ENCODE measurements at regions of chr1 and their contacts with region 1.

Region 1: DNA sequence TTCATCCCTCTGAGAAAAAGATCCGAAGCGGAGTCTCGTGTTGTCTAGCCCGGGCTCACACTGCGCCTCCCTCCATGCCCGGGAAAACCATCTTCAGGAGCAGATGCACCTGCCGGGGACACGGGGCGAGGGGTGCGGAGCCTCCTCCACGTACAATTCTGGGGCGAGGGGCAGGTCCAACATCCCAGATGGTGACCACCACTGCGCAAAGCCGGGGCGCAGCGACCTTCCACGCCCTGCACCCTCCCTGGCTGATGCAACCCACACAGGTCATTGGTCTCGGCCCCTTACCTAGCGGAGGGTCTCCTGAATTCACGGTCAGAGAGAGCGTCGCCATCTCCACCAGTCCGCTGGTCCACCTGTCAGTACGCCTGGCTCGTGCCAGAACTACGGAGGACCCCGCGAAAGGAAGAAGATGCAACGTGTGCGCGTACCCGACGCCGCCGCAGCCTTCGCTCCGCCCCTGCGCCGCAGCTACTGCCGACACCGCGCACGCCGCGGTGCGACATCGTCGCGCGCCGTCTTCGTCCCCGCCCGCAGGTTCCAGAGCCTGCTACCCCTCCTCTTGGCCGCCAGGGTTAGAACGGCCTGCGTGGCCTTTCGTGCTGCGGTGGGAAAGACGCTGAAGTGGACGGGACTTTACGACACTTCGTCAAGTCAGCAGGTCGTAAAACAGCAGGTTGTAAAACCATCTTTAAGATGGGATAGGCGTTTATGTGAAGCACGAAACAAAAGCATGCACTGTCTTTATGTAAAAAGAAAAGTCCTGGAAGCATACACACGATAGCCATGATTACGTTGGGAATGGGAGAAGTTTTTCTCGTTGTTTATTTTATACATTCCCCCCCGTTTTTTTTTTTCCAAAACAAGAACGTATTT is at the start of gene EPRS1:
- DNase-seq: peak; percentile 78 to 95 (median 93)
- H3K4me3 ChIP-seq: peak within 1 kb of the TSS; percentile 63 to 99 (median 91)
- H3K27ac ChIP-seq: peak within 1 kb of the TSS; percentile 30 to 97 (median 90)
- H3K27me3 ChIP-seq: no peaks in the 10 kb centered on the region
- CTCF ChIP-seq: peak in 55 of 56 donors; percentile 30 to 80 (median 64)
- total RNA-seq, gene EPRS1: 58.4 to 112 (median 86.0) TPM

Region 2: DNA sequence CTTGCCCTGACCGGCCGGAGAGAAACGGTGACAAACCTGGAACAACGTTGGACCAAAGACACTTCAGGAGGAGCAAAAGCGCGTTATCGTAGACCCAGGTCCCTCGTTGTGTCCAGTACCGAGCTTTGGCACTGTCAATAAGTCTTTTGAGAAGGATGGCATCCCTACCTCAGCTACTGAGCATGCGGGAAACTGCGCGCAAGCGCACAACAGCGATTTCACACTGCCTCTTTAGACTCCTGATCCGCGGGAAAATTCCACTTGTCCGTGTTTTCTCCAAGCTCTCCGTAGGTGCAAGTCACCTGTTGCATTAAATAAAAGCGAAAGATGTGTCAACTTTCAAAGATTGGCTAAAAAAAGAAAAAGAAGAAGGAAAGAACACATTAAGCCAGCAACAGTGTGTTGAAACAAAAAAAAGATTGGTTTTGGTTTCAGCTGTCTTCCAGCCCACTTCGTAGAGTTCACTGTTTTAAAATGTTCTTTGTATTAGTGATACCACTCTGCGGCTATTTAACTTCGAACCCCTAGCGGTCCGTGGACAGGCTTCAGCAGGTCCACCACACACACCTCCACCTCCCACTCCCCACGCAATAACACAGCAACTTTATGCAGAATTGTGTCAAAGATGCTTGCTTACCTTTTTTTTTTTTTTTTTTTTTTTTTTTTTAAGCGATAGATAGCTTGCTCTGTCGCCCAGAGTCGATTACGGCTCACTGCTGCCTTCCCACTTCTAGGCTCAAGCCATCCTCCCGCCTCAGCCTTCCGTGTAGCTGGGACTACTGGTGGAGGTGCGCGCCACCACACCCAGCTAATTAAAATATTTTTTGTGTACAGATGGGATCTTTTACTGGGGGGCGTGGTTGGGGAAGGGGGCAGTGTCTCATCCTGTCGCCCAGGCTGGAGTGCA is 43.6 kb after region 1 on chr1 and contains the start of gene BPNT1:
- intact Hi-C with region 1: loop called (anchors 2 kb)
- DNase-seq: peak; percentile 86 to 95 (median 90)
- H3K4me3 ChIP-seq: peak within 1 kb of the TSS; percentile 53 to 91 (median 74)
- H3K27ac ChIP-seq: peak within 1 kb of the TSS in 55 of 59 donors; percentile 10 to 89 (median 76)
- H3K27me3 ChIP-seq: no peaks in the 10 kb centered on the region
- CTCF ChIP-seq: peak in 21 of 56 donors; percentile 7 to 58 (median 31)
- total RNA-seq, gene BPNT1: 12.4 to 30.8 (median 19.7) TPM

Measured in dorsolateral prefrontal cortex (tissue), 120 donors.